GM10248 (cell line): ENCODE measurements at regions of chr1 and their contacts with region 1.

Region 1: DNA sequence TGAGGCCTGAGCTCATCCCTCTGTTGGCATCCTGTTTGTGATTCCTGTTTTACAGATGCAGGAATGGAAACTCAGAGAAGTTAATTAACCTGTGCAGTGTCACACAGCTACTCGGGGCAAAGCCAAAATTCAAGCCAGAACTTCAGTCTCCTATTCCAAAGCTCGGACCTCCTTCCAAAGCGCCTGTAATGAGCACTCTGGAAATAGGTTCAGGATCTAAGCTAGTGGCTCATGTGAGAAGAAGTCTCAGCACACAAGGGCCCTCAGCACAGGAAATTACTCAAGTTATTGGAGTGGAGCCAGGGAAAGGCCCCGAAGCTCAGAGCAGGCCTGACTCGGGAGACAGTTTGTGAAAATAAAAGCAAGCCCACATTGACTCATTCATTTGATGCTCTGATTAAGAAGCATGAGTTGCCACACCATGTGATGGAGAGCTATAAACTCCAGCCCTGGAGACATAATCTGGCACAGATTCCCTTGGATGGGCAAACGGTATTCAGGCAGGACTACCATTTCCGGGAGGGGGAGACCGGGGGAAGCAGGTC is 50.6 kb upstream of the LYST start:
- DNase-seq: peak; percentile 70
- CTCF ChIP-seq: no peak

Region 2: GRCh38 chr1:235898116-235898515 is 19.2 kb before region 1 on chr1:
- CTCF ChIA-PET with region 1: interaction called, 11 read pairs
- POLR2A ChIA-PET with region 1: no interaction called
- DNase-seq: no peak
- CTCF ChIP-seq: no peak